H1 (cell line): ENCODE measurements at regions of chr17 and their contacts with region 1.

Region 1: GRCh38 chr17:39153599-39154051 is 2.2 kb upstream of the PLXDC1 start:
- DNase-seq: peak in 1 of 2 experiments; percentile 98
- H3K4me3 ChIP-seq: peak overlapping the region; percentile 72 to 100 (median 87)
- H3K27ac ChIP-seq: peak overlapping the region; percentile 62; the same call in 1 of the 2 replicates
- H3K4me1 ChIP-seq: peaks cover 0 to 15% (median 6%) of the 10 kb centered on the region in 4 experiments; a peak in 4 of 7 replicates
- H3K27me3 ChIP-seq: peaks cover 3 to 18% (median 15%) of the 10 kb centered on the region in 4 experiments
- CTCF ChIP-seq: peak in 1 of 3 experiments; percentile 12; a peak in 2 of 4 replicates
- EP300 ChIP-seq: no peak
- POLR2A ChIP-seq: no peak
- RAD21 ChIP-seq: no peak; a peak in 1 of 4 replicates

Region 2: DNA sequence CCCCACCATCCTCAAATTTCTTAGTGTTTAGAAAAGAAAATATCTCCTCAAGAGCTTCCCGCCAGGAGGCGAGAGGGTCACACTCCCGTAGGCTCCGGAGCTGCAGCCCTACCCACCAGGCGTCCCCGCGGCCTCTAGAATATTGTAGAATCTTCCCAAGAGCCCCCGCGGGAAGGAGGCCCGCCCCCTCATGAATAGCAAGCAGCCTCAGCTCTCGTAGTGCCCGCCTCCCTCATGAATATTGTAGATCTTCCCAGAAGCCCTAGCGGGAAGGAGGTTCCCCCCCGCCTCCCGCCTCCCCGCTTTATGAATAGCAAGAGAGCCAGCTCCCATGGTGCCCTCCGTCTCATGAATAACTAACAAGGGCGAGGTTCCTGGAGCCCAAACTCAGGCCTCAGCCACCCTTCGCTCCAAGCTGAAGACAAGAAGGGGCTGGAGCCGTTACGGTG is 186.3 kb before region 1 on chr17 and contains the start of gene FBXO47:
- CTCF ChIA-PET with region 1: interaction called, 14 read pairs
- POLR2A ChIA-PET with region 1: interaction called, 3 read pairs
- DNase-seq: peak; percentile 92 to 94
- H3K4me3 ChIP-seq: peak within 1 kb of the TSS in 3 of 4 experiments; percentile 5 to 47 (median 23); a peak in 5 of 8 replicates
- H3K27ac ChIP-seq: peak within 1 kb of the TSS; percentile 71
- H3K4me1 ChIP-seq: peaks cover 0 to 2% (median 1%) of the 10 kb centered on the region in 4 experiments; a peak in 3 of 7 replicates
- H3K27me3 ChIP-seq: no peaks in the 10 kb centered on the region
- CTCF ChIP-seq: peak in 2 of 3 experiments; percentile 24 to 26; a peak in 2 of 4 replicates
- EP300 ChIP-seq: no peak
- POLR2A ChIP-seq: peak; percentile 34 to 64; a peak in 2 of 3 replicates
- RAD21 ChIP-seq: peak; percentile 34 to 47; a peak in 3 of 4 replicates
- total RNA-seq, gene FBXO47: not detected in 2 replicates

Region 3: GRCh38 chr17:39062846-39063680 is 90.6 kb before region 1 on chr17:
- CTCF ChIA-PET with region 1: interaction called, 29 read pairs
- POLR2A ChIA-PET with region 1: interaction called, 3 read pairs
- DNase-seq: no peak
- H3K4me3 ChIP-seq: peak overlapping the region in 1 of 4 experiments; percentile 18; a peak in 1 of 8 replicates
- H3K27ac ChIP-seq: no peak overlapping the region
- H3K4me1 ChIP-seq: peaks cover 3 to 13% (median 9%) of the 10 kb centered on the region in 4 experiments; a peak in 6 of 7 replicates
- H3K27me3 ChIP-seq: no peaks in the 10 kb centered on the region
- CTCF ChIP-seq: no peak
- EP300 ChIP-seq: no peak
- POLR2A ChIP-seq: no peak
- RAD21 ChIP-seq: no peak

Region 4: GRCh38 chr17:39080421-39081078 is 73.1 kb before region 1 on chr17:
- CTCF ChIA-PET with region 1: interaction called, 15 read pairs
- POLR2A ChIA-PET with region 1: no interaction called
- DNase-seq: no peak
- H3K4me3 ChIP-seq: peak overlapping the region in 2 of 4 experiments; percentile 7 to 9; a peak in 3 of 8 replicates
- H3K27ac ChIP-seq: no peak overlapping the region
- H3K4me1 ChIP-seq: peaks cover 4 to 16% (median 7%) of the 10 kb centered on the region in 4 experiments
- H3K27me3 ChIP-seq: no peaks in the 10 kb centered on the region
- CTCF ChIP-seq: no peak
- EP300 ChIP-seq: no peak
- POLR2A ChIP-seq: no peak
- RAD21 ChIP-seq: no peak

Region 5: GRCh38 chr17:39139137-39139516 is 14.5 kb before region 1 on chr17:
- CTCF ChIA-PET with region 1: interaction called, 19 read pairs
- POLR2A ChIA-PET with region 1: interaction called, 3 read pairs
- DNase-seq: no peak
- H3K4me3 ChIP-seq: no peak overlapping the region
- H3K27ac ChIP-seq: no peak overlapping the region
- H3K4me1 ChIP-seq: no peaks in the 10 kb centered on the region
- H3K27me3 ChIP-seq: no peaks in the 10 kb centered on the region
- CTCF ChIP-seq: no peak
- EP300 ChIP-seq: no peak
- POLR2A ChIP-seq: no peak
- RAD21 ChIP-seq: no peak

Region 6: GRCh38 chr17:39174907-39175694 is 21.5 kb after region 1 on chr17:
- CTCF ChIA-PET with region 1: interaction called, 151 read pairs
- POLR2A ChIA-PET with region 1: interaction called, 6 read pairs
- DNase-seq: peak; percentile 82 to 92
- H3K4me3 ChIP-seq: peak overlapping the region in 1 of 4 experiments; percentile 22; a peak in 1 of 8 replicates
- H3K27ac ChIP-seq: no peak overlapping the region
- H3K4me1 ChIP-seq: peaks cover 0 to 14% (median 10%) of the 10 kb centered on the region in 4 experiments; a peak in 6 of 7 replicates
- H3K27me3 ChIP-seq: no peaks in the 10 kb centered on the region
- CTCF ChIP-seq: peak; percentile 87 to 92 (median 91)
- EP300 ChIP-seq: no peak
- POLR2A ChIP-seq: peak in 1 of 2 experiments; percentile 60; a peak in 1 of 3 replicates
- RAD21 ChIP-seq: peak; percentile 71 to 83

Region 7: GRCh38 chr17:39209317-39210092 is 55.9 kb after region 1 on chr17:
- CTCF ChIA-PET with region 1: no interaction called
- POLR2A ChIA-PET with region 1: no interaction called
- DNase-seq: peak in 1 of 2 experiments; percentile 76
- H3K4me3 ChIP-seq: peak overlapping the region; percentile 27 to 62 (median 50)
- H3K27ac ChIP-seq: no peak overlapping the region
- H3K4me1 ChIP-seq: peaks cover 5 to 32% (median 24%) of the 10 kb centered on the region in 4 experiments
- H3K27me3 ChIP-seq: peaks cover 0 to 4% (median 2%) of the 10 kb centered on the region in 4 experiments; a peak in 3 of 7 replicates
- CTCF ChIP-seq: no peak
- EP300 ChIP-seq: no peak
- POLR2A ChIP-seq: 0 out of 3 replicates have a peak, but pooled peaks of 1 of the 2 experiments have one; percentile 50
- RAD21 ChIP-seq: no peak

Region 8: DNA sequence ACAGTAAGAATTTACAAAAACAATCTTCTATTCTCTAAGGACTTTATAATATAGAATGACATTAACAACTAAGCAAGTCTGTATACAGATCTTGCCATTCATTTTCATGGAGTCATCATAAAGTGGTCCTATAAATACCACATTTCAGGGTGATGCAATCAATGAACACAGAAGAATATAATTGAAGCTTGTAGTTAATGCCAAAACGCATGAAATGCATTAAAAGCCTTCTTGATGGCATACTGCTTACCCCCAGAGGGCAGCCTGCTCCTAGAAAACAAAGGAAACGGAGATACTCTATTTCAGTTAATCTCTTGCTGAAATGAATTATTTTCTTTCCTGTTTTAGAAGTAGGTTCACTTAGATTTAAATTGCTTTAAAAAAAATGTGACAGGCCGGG is 117.3 kb after region 1 on chr17:
- CTCF ChIA-PET with region 1: no interaction called
- POLR2A ChIA-PET with region 1: no interaction called
- DNase-seq: no peak
- H3K4me3 ChIP-seq: no peak overlapping the region
- H3K27ac ChIP-seq: no peak overlapping the region
- H3K4me1 ChIP-seq: no peaks in the 10 kb centered on the region
- H3K27me3 ChIP-seq: no peaks in the 10 kb centered on the region
- CTCF ChIP-seq: peak in 1 of 3 experiments; percentile 36; a peak in 1 of 4 replicates
- EP300 ChIP-seq: no peak
- POLR2A ChIP-seq: no peak
- RAD21 ChIP-seq: peak; percentile 56 to 58